Panc1 (cell line): ENCODE measurements at regions of chr7 and their contacts with region 1.

Region 1: GRCh38 chr7:73606801-73607691 is 17.3 kb downstream of the MLXIPL start:
- DNase-seq: no peak
- ATAC-seq: peak; percentile 77
- H3K4me3 ChIP-seq: no peak overlapping the region
- H3K27ac ChIP-seq: no peak overlapping the region
- H3K4me1 ChIP-seq: no peaks in the 10 kb centered on the region; the same call in 1 of the 2 replicates
- H3K27me3 ChIP-seq: no peaks in the 10 kb centered on the region
- CTCF ChIP-seq: peak; percentile 98

Region 2: DNA sequence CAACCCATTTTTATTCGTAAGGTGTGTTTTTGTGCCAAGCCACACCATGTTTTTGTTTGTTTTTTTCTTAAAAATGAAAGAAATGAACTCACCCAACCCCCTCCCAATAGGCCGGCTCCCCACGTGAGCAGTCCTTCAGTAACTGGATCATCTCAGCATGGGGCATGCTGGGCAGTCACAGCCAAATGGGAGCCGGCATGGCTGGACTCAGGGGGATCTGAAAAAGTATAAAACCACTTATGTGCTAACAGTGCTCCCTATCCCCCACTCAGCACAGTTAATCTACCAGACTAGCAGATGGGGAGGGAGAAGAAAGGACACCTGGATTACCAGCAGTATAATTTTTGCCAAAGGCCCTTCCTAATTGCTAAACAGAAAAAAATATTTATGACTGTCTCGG is 124.3 kb before region 1 on chr7:
- CTCF ChIA-PET with region 1: no interaction called
- POLR2A ChIA-PET with region 1: no interaction called
- in situ Hi-C with region 1: no loop called
- intact Hi-C with region 1: no loop called
- DNase-seq: no peak
- ATAC-seq: 0 out of 2 replicates have a peak, but pooled peaks have one; percentile 27
- H3K4me3 ChIP-seq: no peak overlapping the region
- H3K27ac ChIP-seq: no peak overlapping the region
- H3K4me1 ChIP-seq: no peaks in the 10 kb centered on the region
- H3K27me3 ChIP-seq: no peaks in the 10 kb centered on the region
- CTCF ChIP-seq: no peak

Region 3: DNA sequence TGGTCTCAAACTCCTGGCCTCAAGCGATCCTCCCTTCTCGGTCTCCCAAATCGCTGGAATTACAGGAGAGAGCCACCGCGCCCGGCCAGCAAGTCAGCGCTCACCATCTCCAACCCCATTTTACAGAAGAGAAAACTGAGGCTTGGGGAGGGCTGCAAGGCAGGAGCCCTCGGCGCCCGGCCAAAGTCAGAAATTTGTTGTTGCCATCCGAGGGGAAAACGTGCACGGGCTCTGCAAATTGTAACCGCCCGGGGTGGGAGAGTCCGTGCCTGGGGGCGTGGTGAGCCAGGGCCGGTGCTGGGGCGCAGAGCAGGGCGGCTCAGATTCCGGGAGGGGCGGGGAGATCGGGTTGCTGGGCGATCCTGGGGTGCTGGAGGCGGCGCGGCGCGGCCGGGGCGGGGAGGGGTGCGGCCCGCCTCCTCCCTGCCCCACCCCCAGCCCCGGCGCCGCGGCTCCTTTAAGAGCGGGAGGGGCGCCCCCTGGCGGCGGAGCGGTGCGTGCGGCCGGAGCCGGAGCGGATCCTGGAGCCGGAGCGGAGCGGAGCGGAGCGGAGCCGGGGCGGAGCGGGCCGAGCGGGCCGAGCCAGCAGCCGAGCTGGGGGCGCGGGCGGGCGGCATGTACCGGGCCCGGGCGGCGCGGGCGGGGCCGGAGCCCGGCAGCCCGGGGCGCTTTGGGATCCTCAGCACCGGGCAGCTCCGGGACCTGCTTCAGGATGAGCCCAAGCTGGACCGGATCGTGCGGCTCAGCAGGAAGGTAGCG is 60.5 kb after region 1 on chr7 and contains the start of gene VPS37D:
- CTCF ChIA-PET with region 1: interaction called, 4 read pairs
- POLR2A ChIA-PET with region 1: no interaction called
- in situ Hi-C with region 1: no loop called
- intact Hi-C with region 1: loop called (anchors 5 kb)
- DNase-seq: no peak
- ATAC-seq: peak; percentile 92
- H3K4me3 ChIP-seq: peak within 1 kb of the TSS; percentile 45 to 73
- H3K27ac ChIP-seq: peak within 1 kb of the TSS; percentile 58; the same call in 1 of the 2 replicates
- H3K4me1 ChIP-seq: peaks cover 8% of the 10 kb centered on the region
- H3K27me3 ChIP-seq: no peaks in the 10 kb centered on the region
- CTCF ChIP-seq: peak; percentile 97
- total RNA-seq, gene VPS37D: 4.4 TPM

Region 4: GRCh38 chr7:73726083-73726466 is 119.0 kb after region 1 on chr7:
- CTCF ChIA-PET with region 1: interaction called, 11 read pairs
- POLR2A ChIA-PET with region 1: interaction called, 6 read pairs
- in situ Hi-C with region 1: no loop called
- intact Hi-C with region 1: loop called (anchors 5 kb)
- DNase-seq: no peak
- ATAC-seq: peak; percentile 46
- H3K4me3 ChIP-seq: no peak overlapping the region
- H3K27ac ChIP-seq: no peak overlapping the region
- H3K4me1 ChIP-seq: peaks cover 14% of the 10 kb centered on the region
- H3K27me3 ChIP-seq: no peaks in the 10 kb centered on the region
- CTCF ChIP-seq: no peak; the same call in none of the 2 replicates

Region 5: GRCh38 chr7:73758581-73759138 is 151.6 kb after region 1 on chr7:
- CTCF ChIA-PET with region 1: interaction called, 11 read pairs
- POLR2A ChIA-PET with region 1: no interaction called
- in situ Hi-C with region 1: no loop called
- intact Hi-C with region 1: no loop called
- DNase-seq: no peak
- ATAC-seq: peak; percentile 42; the same call in 1 of the 2 replicates
- H3K4me3 ChIP-seq: no peak overlapping the region
- H3K27ac ChIP-seq: no peak overlapping the region
- H3K4me1 ChIP-seq: 0 out of 2 replicates have a peak, but pooled peaks cover 4% of the 10 kb centered on the region
- H3K27me3 ChIP-seq: no peaks in the 10 kb centered on the region
- CTCF ChIP-seq: no peak

Region 6: GRCh38 chr7:73903321-73903903 is 296.4 kb after region 1 on chr7:
- CTCF ChIA-PET with region 1: no interaction called
- POLR2A ChIA-PET with region 1: interaction called, 11 read pairs
- in situ Hi-C with region 1: no loop called
- intact Hi-C with region 1: no loop called
- DNase-seq: no peak
- ATAC-seq: no peak
- H3K4me3 ChIP-seq: no peak overlapping the region
- H3K27ac ChIP-seq: no peak overlapping the region
- H3K4me1 ChIP-seq: no peaks in the 10 kb centered on the region
- H3K27me3 ChIP-seq: no peaks in the 10 kb centered on the region
- CTCF ChIP-seq: no peak